Left colon (tissue), 2 donors: ENCODE measurements at regions of chr21 and their contacts with region 1.

Region 1: DNA sequence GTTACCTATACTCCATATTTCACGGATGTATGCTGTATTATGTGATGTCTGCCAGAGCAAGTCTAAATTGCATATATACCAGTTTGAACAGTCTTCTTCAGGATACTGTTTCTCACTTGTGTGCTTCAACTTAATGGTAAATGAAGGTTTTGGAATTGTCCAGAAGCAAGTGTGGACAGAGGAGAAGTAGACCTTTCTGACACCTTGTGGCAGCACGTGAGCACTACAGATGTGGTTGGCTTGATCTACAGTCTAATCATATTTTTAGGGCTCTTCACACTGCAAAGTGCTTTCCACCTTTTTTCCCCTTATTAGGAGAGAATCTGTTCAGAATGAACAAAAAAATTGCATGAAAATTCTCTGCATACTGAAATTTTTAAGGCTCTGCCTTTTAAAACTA is 10.9 kb downstream of the MORC3 start:
- DNase-seq: peak; percentile 45 to 67
- ATAC-seq: peak; percentile 87

Region 2: GRCh38 chr21:36141513-36141925 is 189.4 kb before region 1 on chr21:
- intact Hi-C with region 1: loop called in 1 of 2 experiments (anchors 10 kb)
- DNase-seq: peak; percentile 95 to 98
- ATAC-seq: peak; percentile 94

Region 3: GRCh38 chr21:37370152-37371040 is 1039.5 kb after region 1 on chr21:
- intact Hi-C with region 1: no loop called
- DNase-seq: no peak
- ATAC-seq: no peak